Stomach (tissue), 19 donors: ENCODE measurements at regions of chr11 and their contacts with region 1.

Region 1: DNA sequence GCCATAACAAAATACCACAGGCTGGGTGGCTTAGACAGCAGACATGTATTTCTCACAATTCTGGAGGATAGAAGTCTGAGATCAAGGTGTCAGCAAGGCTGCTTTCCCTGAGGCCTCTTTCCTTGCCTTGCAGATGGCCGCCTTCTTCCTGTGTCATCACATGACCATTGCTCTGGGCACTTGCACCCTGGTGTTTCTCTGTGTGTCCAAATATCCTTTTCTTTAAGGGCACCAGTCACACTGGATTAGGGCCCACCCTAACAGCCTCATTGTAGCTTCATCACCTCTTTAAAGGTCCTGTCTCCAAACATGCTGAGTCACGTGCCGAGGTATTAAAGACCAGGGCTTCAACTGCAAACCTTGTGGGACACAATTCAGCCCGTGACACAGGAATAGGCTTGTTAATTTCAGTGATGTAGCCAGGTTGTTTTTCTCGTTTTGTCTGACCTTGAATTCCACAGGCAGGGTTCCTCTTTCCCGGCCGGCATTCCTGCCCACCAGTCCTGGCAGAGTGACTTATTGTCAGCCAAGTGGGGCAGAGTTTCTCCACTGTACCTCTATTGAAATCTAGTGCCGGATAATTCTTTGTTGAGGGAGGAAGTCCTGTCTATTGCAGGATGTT is 100.1 kb downstream of the KCNQ1OT1 start:
- DNase-seq: peak in 1 of 2 donors; percentile 22
- H3K4me3 ChIP-seq: no peak overlapping the region
- H3K27ac ChIP-seq: no peak overlapping the region
- H3K4me1 ChIP-seq: no peaks in the 10 kb centered on the region
- H3K27me3 ChIP-seq: no peaks in the 10 kb centered on the region
- CTCF ChIP-seq: no peak
- EP300 ChIP-seq: no peak
- POLR2A ChIP-seq: no peak

Region 2: DNA sequence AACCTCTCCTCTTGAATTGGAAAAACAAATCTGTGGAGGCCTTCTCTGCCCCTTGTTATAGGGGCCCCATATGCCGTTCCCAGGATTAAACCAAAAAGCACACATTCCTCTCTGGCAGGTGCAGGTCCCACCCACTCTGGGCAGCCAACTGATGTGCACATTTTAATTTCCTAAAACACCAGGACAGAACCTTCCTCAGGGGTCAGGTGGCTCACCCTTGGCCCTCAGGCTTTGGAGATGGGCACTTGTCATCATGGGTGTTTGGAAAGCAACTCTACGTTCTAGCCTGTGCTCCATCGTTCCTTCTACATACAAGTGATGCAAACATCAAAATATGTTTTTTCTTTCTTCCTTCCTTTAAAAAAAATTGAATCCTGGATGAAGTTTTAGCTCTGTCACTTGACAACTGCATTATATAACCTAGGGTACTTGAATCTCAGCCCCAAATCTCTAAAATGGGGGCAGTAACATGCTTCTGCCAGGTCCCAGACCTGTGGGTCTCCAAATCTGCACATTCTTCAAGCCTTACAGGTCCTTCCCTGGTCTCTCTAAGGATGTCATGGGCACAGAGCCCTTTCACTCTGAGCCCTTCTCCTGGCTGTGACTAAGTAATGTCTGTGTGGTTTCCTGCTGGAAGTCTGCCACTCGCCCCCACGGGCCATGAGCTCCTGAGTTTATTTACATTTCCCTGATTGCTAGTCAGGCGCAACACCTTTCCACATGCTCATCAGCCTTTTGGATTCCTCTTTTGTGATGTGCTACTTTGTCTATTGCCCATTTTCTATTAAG is 56.4 kb after region 1 on chr11:
- intact Hi-C with region 1: loop called (anchors 10 kb)
- DNase-seq: no peak
- H3K4me3 ChIP-seq: no peak overlapping the region
- H3K27ac ChIP-seq: no peak overlapping the region
- H3K4me1 ChIP-seq: peaks cover 0 to 5% (median 0%) of the 10 kb centered on the region in 4 donors
- H3K27me3 ChIP-seq: no peaks in the 10 kb centered on the region
- CTCF ChIP-seq: no peak
- EP300 ChIP-seq: no peak
- POLR2A ChIP-seq: no peak

Region 3: DNA sequence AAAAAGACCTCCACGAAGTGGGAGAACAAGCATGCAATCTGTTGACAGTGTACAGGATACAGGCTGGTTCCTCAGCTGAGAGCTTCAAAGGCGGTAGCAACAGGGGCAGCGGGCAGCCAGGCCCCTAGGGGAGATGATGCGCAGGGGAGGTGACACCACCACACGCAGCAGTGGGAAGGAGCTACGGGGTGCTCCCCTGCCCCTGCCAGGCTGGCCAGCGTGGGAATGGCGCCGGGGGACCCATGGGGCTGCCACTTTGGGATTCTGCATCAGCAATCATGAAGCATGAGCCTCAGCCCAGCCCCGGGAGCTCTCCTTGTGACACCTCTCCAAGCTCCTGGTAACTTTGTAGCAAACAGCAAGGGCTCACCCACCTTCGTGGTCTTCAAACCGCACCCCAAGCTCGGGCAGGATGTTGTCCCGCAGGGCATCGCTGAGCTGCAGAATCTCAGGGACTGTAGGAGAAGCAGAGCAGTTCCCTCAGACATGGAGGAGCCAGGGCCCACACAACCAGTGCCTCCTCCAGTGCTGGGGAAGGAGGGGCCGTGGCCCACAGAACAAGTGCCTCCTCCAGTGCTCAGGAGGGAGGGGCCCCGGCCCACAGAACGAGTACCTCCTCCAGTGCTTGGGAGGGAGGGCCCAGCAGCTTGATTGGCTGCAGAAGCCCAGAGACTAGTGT is 407.0 kb after region 1 on chr11:
- intact Hi-C with region 1: no loop called
- DNase-seq: no peak
- H3K4me3 ChIP-seq: no peak overlapping the region
- H3K27ac ChIP-seq: no peak overlapping the region
- H3K4me1 ChIP-seq: peaks cover 8 to 37% (median 30%) of the 10 kb centered on the region in 4 donors
- H3K27me3 ChIP-seq: no peaks in the 10 kb centered on the region
- CTCF ChIP-seq: no peak
- EP300 ChIP-seq: no peak
- POLR2A ChIP-seq: no peak